Aorta (tissue), 5 donors: ENCODE measurements at regions of chr12 and their contacts with region 1.

Region 1: DNA sequence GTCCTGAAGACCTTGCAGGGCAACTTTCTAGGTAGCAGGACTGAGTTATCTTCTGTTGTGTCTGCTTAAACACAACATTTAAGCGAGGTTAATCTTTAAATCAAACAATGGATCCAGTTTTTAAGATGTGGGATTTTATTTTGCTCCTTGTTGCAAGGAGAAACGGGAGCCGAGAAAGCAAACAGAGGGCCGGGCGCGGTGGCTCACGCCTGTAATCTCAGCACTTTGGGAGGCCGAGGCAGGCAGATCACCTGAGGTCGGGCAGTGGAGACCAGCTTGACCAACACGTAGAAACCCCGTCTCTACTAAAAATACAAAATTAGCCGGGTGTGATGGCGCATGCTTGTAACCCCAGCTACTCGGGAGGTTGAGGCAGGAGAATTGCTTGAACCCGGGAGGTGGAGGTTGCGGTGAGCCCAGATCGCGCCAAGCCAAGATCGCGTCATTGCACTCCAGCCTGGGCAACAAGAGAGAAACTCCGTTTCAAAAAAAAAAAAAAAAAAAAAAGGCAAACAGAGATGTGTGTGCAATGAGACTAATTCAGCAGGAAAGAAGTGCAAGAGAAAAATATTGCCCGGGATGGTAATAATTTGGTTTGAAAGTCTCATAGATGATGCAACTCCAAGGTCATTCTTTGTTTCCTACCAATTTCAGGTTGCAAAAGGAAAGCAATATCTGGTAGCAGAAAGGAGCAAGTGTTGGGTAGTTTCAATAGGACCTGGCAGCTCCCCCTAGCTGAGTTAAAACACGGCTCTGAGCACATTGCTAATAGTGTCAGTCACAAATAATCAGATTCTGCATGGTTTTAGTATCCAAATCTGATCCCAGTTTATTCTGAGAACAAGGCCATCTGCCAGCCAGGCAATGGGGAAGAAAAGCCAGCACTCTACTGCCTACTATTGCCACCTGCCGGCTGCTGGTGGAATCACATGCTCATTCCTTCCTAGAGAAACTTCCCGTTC is 141.4 kb downstream of the PPM1H start:
- DNase-seq: peak; percentile 85 to 94
- ATAC-seq: peak; percentile 93
- H3K4me3 ChIP-seq: no peak overlapping the region
- H3K27ac ChIP-seq: no peak overlapping the region
- H3K4me1 ChIP-seq: peaks cover 2 to 9% of the 10 kb centered on the region in 2 donors
- H3K27me3 ChIP-seq: no peaks in the 10 kb centered on the region

Region 2: GRCh38 chr12:62166510-62166909 is 627.0 kb before region 1 on chr12:
- intact Hi-C with region 1: no loop called
- DNase-seq: no peak
- ATAC-seq: peak; percentile 72
- H3K4me3 ChIP-seq: no peak overlapping the region
- H3K27ac ChIP-seq: no peak overlapping the region
- H3K4me1 ChIP-seq: no peaks in the 10 kb centered on the region
- H3K27me3 ChIP-seq: no peaks in the 10 kb centered on the region

Region 3: DNA sequence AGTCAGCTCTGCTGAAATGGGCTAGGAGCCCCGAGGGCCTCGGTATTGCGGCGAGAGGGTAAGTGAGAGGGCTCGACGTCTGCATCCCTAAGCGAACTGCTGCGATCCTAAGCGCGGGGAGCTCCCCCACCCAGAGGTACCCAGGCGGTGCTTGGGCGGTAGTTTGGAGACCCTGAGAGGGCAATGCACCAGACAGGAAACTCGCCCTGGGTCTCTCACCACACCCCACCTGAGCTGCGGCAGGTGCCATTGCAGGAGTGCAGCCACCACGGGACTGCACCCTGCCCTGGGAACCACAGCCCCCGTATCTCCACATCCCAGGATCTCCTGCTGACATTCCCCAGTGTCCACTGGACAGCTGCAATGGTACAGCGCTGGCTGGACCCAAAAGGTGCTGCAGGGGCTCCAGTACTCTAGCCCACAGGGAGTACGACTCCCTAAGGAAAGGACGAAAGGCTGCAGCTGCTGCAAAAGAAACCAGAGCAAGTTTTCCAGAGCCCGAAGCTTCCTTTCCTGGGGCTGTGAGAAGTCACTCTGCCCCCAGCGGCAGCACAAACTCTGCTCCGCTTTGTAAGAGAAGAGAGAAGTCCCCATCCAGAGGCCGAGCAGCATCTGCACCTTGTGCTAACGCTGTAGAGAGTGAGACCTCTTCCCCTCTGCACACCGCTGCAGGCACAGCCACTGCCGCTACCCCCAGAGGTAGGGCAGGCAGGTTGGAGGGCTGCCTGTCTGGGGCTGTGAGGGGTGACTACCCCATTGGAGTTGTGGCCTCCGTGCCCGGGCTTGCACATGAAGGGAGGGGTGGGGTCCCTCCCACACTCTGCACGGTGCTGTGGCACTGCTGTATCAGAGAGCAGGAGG is 358.0 kb before region 1 on chr12:
- intact Hi-C with region 1: loop called (anchors 5 kb)
- DNase-seq: peak; percentile 77 to 78
- ATAC-seq: peak; percentile 87
- H3K4me3 ChIP-seq: peak overlapping the region; percentile 23 to 32
- H3K27ac ChIP-seq: no peak overlapping the region
- H3K4me1 ChIP-seq: no peaks in the 10 kb centered on the region
- H3K27me3 ChIP-seq: no peaks in the 10 kb centered on the region

Region 4: GRCh38 chr12:62446754-62447452 is 346.6 kb before region 1 on chr12:
- intact Hi-C with region 1: no loop called
- DNase-seq: no peak
- ATAC-seq: no peak
- H3K4me3 ChIP-seq: no peak overlapping the region
- H3K27ac ChIP-seq: no peak overlapping the region
- H3K4me1 ChIP-seq: no peaks in the 10 kb centered on the region
- H3K27me3 ChIP-seq: no peaks in the 10 kb centered on the region

Region 5: DNA sequence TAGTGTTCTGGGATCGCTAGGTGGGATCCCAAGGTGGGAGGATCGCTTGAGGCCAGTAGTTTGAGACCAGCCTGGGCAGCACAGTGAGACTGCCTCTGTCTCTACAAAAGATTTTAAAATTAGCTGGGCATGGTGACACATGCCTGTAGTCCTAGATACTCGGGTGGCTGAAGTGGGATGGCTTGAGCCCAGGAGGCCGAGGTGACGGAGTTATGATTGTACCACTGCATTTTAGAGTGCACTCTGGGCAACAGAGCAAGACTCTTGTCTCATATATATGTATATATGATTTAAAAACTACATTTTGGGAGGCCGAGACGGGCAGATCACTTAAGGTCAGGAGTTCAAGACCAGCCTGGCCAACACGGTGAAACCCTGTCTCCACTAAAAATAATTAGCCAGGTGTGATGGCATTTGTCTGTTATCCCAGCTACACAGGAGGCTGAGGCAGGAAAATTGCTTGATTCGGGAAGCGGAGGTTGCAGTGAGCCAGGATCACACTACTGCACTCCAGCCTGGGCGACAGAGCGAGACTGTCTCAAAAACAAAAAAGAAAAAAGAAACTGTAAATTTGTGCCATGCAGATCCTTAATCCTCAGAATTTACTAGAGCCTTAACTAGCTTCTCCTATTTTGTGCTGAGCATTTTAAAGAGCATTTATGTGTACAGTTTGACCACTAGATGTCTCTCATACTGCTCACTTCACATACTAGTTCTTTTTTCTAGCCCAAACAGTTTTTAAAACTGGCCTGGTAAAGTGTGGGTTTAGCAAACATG is 212.1 kb before region 1 on chr12:
- intact Hi-C with region 1: loop called (anchors 1 to 5 kb)
- DNase-seq: no peak
- ATAC-seq: peak; percentile 80
- H3K4me3 ChIP-seq: no peak overlapping the region
- H3K27ac ChIP-seq: no peak overlapping the region
- H3K4me1 ChIP-seq: no peaks in the 10 kb centered on the region
- H3K27me3 ChIP-seq: no peaks in the 10 kb centered on the region

Region 6: DNA sequence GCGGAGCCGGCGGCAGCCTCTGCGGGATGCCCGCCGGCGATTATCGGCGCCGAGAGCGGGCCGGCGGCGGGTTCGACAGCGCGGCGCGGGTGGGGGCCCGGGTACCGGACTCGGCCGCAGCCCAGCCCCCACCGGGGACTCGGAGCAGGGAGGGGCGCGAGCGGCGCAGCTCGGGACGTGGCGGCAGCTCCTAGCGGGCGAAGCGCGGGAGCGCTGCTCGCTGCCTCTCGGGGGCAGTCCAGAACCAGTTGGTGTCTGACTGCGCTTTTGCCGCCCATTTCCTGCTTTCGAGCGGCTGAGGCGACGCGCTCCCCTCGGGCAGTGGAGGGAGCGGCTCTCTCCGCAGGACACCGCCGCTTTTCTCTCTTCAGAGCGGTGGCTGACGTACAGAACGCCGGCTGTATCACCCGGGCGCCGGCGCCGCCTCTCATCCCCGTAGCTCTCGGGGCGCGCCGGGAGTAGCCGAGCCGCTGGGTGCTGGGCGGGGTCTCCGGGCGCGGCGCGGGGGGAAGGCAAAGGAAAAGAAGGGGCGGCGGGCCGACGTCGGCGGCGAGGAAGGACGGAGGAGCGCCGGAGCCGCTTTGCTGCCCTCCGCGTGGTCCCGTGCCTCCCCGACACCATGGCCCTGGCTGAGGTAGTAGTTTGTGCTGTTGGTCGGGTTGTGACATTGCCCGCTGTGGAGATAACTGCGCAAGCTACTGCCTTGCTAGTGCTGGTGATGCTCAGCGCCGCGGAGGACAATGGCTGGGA is 190.3 kb before region 1 on chr12:
- intact Hi-C with region 1: loop called (anchors 2 kb)
- DNase-seq: peak; percentile 93 to 95
- ATAC-seq: peak; percentile 97
- H3K4me3 ChIP-seq: peak overlapping the region; percentile 48 to 94
- H3K27ac ChIP-seq: peak overlapping the region; percentile 72 to 100
- H3K4me1 ChIP-seq: no peaks in the 10 kb centered on the region
- H3K27me3 ChIP-seq: no peaks in the 10 kb centered on the region

Region 7: GRCh38 chr12:62731055-62731820 is 62.3 kb before region 1 on chr12:
- intact Hi-C with region 1: loop called in 1 of 2 experiments (anchors 5 kb)
- DNase-seq: no peak
- ATAC-seq: peak; percentile 73
- H3K4me3 ChIP-seq: peak overlapping the region in 1 of 2 donors; percentile 38
- H3K27ac ChIP-seq: peak overlapping the region; percentile 38 to 64
- H3K4me1 ChIP-seq: no peaks in the 10 kb centered on the region
- H3K27me3 ChIP-seq: no peaks in the 10 kb centered on the region